ENCODE measurements at regions of chr17 and their contacts with region 1.

Region 1: DNA sequence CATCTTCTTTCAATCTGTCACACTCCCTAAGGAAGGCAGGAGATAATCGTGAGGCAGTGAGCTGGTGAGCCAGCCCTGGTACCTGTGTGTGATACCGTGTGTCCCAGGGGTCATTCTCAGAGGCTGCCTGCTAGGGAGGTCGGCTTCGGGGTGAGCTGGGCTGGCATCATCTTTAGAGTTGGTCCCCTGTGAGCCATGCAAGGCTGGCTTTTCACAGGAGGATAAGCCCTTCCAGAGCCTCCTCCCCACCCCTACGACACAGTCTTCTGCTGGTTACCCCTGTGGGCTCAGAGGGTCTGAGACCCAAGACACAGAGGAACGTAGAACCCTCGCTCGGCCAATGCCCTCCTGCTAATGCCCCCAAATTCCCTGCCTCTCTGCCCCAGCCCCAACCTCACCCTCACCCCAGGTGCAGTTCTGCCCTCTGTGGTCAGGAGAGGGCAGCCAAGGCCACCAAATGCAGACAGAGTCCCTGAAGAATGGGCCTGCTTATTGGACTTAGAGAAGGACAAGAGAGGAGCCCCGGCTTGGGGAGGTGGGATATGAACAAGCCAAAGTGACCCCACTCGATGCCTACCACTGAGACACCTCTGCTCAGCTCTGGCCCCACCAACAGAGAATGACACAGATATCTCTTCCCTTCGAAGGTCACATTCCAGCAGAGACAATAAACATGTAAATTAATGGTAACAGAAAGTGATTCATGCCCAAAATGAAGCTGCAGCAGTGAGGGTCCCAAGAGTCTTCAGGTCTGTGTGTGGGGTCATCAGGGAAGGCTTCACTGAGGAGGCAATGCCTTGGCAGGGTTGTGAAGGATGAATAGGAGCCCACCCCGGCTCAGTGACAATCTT is 80.8 kb upstream of the CCL1 start:
- DNase-seq: no peak
- ATAC-seq: peak; percentile 67

Region 2: GRCh38 chr17:34199932-34200534 is 243.8 kb before region 1 on chr17:
- intact Hi-C with region 1: no loop called
- DNase-seq: peak; percentile 54
- ATAC-seq: peak; percentile 93

Region 3: GRCh38 chr17:34361478-34362061 is 82.3 kb before region 1 on chr17:
- intact Hi-C with region 1: no loop called
- DNase-seq: peak; percentile 95
- ATAC-seq: peak; percentile 95

Region 4: DNA sequence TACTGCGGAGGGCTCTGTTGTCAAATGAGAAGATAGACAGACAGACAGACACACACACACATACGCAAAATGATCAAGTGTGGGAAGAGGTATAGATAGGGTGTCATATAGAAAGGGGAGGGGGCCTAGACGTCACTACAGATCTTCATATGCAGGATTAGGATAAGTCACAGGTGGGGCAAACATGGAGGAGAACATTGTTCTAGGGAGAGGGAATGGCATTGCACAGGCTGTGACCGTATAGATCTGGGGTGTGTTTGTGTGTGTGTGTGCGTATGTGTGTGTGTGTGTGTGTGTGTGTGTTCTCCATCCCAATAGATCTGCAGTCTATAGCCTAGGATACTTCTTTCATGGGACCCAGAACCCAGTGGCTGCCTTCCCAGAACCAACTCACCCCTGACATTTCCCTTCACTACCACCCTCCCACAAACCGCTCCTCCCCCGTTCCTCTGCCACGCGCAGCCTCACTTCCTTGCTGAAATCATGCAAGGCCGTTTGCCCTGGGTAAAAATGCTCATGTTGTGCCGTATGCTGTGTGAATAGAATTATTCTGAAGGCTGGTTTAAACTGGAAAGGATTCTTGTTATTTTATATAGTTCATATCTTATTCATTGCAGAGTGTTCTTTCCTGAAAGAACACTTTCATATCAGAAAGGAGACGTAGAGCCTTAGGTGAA is 30.3 kb before region 1 on chr17:
- intact Hi-C with region 1: no loop called
- DNase-seq: no peak
- ATAC-seq: no peak

Region 5: GRCh38 chr17:34527908-34528470 is 84.1 kb after region 1 on chr17:
- intact Hi-C with region 1: loop called (anchors 10 kb)
- DNase-seq: no peak
- ATAC-seq: no peak

Measured in Right ventricle myocardium superior (tissue), 1 donor.